AG04449 (cell line): ENCODE measurements at regions of chr14 and their contacts with region 1.

Region 1: DNA sequence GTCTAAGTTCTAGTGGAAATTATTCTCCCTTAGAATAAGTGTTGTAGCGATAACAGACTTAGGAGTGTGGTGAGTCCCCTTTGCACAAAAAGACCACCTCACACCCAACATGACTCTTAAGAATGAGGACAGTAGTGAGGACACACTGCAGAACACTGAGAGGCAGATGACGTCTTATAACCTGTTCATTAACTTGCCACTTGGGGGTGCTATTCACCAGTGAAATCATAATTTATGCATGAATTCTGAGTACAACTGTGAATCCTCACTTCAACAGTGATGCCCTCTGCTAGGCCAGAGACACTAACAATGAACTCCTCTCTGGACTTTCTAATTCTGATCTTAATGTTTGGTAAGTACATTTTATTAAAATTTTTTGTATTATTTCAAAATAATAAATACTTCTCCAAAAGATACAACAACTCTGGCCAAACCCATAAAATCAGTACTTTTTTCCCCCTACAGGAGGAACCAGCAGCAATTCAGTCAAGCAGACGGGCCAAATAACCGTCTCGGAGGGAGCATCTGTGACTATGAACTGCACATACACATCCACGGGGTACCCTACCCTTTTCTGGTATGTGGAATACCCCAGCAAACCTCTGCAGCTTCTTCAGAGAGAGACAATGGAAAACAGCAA is 274.7 kb downstream of the DAD1 start:
- DNase-seq: no peak
- H3K4me3 ChIP-seq: no peak overlapping the region
- CTCF ChIP-seq: peak; percentile 63

Region 2: GRCh38 chr14:22233377-22233776 is 80.9 kb before region 1 on chr14:
- CTCF ChIA-PET with region 1: no interaction called
- POLR2A ChIA-PET with region 1: no interaction called
- DNase-seq: no peak
- H3K4me3 ChIP-seq: no peak overlapping the region
- CTCF ChIP-seq: no peak

Region 3: GRCh38 chr14:22296722-22297121 is 17.6 kb before region 1 on chr14:
- CTCF ChIA-PET with region 1: interaction called, 14 read pairs
- POLR2A ChIA-PET with region 1: no interaction called
- DNase-seq: no peak
- H3K4me3 ChIP-seq: no peak overlapping the region
- CTCF ChIP-seq: no peak

Region 4: DNA sequence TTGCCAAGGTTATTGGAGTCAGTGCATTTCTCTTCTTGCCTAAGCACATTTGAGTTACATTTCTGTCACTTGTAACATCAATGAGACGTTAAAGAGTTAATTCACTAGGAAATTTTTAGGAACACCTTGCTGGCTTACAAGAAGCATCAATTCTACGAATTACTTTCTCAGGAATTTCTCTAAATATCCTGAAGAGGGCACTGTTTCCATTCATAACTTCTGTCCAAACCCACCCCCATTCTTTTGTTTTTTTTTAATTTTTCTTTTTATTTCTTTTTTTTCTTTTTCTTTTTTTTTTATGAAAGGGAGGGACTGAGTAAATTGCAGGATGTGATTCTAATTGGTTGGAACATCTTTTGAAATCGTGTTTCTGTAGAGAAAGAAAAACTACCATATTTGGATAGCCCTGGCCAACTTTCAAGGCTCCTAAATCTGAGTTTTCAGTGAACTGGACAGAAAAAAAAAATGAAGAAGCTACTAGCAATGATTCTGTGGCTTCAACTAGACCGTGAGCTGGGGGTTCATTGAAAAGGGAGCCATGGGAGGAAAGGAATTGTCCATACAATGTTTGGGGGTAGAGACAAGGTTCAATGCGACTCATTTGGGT is 10.6 kb before region 1 on chr14:
- CTCF ChIA-PET with region 1: interaction called, 34 read pairs
- POLR2A ChIA-PET with region 1: no interaction called
- DNase-seq: no peak
- H3K4me3 ChIP-seq: no peak overlapping the region
- CTCF ChIP-seq: no peak

Region 5: DNA sequence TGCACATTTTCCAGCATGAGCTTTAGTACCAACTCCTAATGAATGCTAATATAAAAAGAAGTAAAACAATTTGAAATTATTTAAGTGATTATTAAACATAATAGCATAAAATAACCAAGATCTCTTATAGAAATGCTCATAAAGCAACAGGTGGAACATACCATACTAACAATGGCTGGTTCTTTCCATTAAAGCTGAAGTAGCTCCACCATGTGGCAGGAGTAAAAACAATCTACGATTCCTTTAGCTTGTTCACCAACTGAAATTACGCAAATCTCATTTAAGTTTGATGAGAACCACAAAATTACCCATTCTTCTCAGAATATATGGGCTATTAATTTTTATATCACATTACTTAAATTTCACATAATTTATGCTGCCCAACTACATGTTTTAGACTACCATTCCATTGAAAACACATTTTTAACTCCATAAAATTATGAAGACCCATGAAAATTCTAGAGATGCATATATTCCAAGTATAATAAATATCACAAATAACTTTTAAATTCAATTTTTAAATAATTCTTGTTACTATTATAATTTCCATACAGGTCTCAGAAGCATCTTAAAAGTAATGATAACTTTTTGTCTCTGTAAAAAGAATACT is 61.1 kb after region 1 on chr14:
- CTCF ChIA-PET with region 1: interaction called, 96 read pairs
- POLR2A ChIA-PET with region 1: no interaction called
- DNase-seq: no peak
- H3K4me3 ChIP-seq: no peak overlapping the region
- CTCF ChIP-seq: peak; percentile 39

Region 6: GRCh38 chr14:22412926-22413411 is 98.7 kb after region 1 on chr14:
- CTCF ChIA-PET with region 1: no interaction called
- POLR2A ChIA-PET with region 1: no interaction called
- DNase-seq: no peak
- H3K4me3 ChIP-seq: no peak overlapping the region
- CTCF ChIP-seq: no peak

Region 7: GRCh38 chr14:22466491-22466890 is 152.2 kb after region 1 on chr14:
- CTCF ChIA-PET with region 1: no interaction called
- POLR2A ChIA-PET with region 1: no interaction called
- DNase-seq: no peak
- H3K4me3 ChIP-seq: no peak overlapping the region
- CTCF ChIP-seq: no peak

Region 8: DNA sequence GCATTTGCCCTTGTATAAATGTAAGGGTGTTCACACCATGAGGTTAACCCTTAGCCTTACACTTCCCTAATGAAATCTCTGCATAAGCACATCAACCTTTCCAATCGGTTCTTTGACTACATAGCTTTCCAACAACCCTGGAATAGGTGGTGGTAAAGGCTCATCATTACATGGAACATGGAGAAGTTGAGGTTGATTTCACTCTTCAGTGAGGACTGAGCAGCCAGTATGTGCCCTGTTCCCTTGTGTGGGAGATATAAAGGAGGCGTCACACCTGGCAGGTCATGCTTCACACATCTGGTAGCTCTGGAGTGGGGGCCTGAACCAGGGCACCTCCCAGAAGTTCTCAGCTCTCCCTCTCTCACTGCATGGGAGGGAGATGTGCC is 1286.0 kb after region 1 on chr14:
- CTCF ChIA-PET with region 1: no interaction called
- POLR2A ChIA-PET with region 1: no interaction called
- DNase-seq: no peak
- H3K4me3 ChIP-seq: no peak overlapping the region
- CTCF ChIP-seq: no peak